Activated CD8-positive, alpha-beta memory T cell treated with anti-CD3 and anti-CD28 coated beads, Interleukin-2, amount 10 ng/mL, durations not matched to agents 7 days and 5 days (primary cell): ENCODE measurements at regions of chr9 and their contacts with region 1.

Region 1: GRCh38 chr9:36487482-36488388 is 85.0 kb upstream of the MELK start:
- DNase-seq: peak; percentile 93
- ATAC-seq: peak; percentile 95
- H3K4me3 Mint-ChIP-seq: peak overlapping the region; percentile 89
- H3K27ac Mint-ChIP-seq: peak overlapping the region; percentile 100
- H3K4me1 Mint-ChIP-seq: peaks cover 54% of the 10 kb centered on the region
- H3K27me3 Mint-ChIP-seq: no peaks in the 10 kb centered on the region

Region 2: GRCh38 chr9:36423206-36423605 is 64.5 kb before region 1 on chr9:
- CTCF ChIA-PET with region 1: no interaction called
- DNase-seq: no peak
- ATAC-seq: no peak
- H3K4me3 Mint-ChIP-seq: no peak overlapping the region
- H3K27ac Mint-ChIP-seq: no peak overlapping the region
- H3K4me1 Mint-ChIP-seq: peaks cover 7% of the 10 kb centered on the region
- H3K27me3 Mint-ChIP-seq: no peaks in the 10 kb centered on the region

Region 3: DNA sequence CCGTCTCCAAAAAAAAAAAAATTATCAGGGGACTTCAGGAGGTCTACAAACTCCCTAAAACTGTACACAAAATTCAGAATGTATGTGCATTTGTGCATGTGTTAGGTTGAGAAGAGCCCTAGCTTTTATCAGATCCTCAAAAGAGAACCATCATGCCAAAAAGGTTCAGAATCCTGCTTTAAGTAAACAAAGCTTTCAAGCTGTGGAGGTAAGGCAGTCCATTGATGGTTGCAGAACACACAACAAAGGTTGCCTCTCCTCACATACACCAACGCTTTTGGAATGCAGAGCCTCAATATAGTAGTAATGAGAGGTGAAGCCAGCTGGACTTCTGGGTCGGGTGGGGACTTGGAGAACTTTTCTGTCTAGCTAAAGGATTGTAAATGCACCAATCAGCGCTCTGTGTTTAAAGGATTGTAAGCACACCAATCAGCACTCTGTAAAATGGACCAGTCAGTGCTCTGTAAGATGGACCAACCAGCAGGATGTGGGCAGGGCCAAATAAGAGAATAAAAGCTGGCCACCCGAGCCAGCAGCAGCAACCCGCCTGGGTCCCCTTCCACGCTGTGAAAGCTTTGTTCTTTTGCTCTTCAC is 29.8 kb before region 1 on chr9:
- CTCF ChIA-PET with region 1: interaction called, 12 read pairs
- DNase-seq: no peak
- ATAC-seq: peak; percentile 35
- H3K4me3 Mint-ChIP-seq: peak overlapping the region; percentile 62
- H3K27ac Mint-ChIP-seq: peak overlapping the region; percentile 80
- H3K4me1 Mint-ChIP-seq: peaks cover 49% of the 10 kb centered on the region
- H3K27me3 Mint-ChIP-seq: no peaks in the 10 kb centered on the region

Region 4: DNA sequence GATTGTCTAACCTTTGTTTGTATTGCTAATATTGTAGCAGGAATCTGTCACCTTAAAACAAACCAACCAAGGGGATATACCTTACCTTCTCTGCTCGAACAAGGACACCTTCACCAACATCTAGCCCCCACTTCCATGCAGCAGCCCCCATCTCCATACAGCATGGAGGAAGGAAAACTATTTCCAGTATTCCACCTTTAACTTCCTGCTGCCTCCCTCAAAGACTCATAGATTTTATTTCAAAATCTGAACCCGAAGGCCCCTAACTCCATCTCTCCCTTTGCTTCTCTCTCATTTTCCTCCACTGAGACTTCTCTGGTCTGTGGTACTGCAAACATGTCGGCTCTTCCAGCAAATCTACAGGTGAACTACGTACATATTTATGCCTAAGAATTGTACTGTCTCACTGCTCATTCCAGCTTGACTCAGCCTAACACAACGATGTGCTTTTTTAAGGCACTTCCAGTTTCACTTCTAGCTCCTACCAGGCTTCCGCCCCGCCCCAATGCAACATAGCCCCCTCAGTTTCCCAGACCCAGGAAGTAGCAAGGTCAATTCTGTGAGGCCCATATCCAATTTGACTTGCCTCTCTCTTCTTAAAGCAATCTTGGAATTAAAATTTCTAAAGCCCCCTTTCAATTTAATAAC is 17.0 kb before region 1 on chr9:
- CTCF ChIA-PET with region 1: interaction called, 16 read pairs
- DNase-seq: peak; percentile 89
- ATAC-seq: peak; percentile 99
- H3K4me3 Mint-ChIP-seq: peak overlapping the region; percentile 80
- H3K27ac Mint-ChIP-seq: peak overlapping the region; percentile 91
- H3K4me1 Mint-ChIP-seq: peaks cover 35% of the 10 kb centered on the region
- H3K27me3 Mint-ChIP-seq: no peaks in the 10 kb centered on the region

Region 5: DNA sequence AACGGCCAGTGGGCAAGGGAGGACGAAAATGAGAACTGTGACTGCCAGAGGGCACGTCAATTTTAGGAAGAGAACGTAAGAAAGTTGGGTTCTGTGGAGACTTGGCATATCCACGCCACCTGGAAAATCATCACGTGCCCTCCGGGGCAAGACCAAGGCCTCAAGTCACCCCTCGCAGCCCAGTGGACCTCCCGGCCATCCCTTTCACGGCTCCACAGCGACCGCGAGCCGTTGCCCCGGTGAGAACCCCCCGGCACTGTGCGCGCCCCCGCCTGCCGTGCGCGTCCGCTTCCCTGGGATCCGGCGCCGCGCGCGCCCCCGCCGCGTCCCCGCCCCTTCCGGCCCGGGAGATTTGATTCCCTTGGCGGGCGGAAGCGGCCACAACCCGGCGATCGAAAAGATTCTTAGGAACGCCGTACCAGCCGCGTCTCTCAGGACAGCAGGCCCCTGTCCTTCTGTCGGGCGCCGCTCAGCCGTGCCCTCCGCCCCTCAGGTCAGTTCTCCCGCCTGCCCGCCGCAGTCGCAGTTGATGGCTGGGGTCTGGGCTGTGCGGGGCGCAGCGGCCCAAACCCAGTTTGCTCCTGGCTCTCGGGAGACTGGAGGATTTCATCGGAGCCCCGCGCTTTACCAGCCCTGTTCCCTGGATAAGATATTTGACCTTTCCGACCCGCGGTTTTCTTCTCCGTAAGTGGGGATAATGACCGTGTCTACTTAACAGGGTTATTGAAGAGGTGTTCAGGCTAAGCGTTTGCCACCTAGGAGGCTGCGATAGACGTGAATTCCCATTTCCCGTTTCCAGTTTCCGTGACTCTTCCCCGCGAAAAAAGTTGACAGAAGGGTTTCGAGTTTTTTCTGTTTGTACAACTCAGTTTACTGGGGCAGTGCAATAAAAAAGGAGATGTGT is 85.0 kb after region 1 on chr9 and contains the start of gene MELK:
- CTCF ChIA-PET with region 1: no interaction called
- DNase-seq: peak; percentile 89
- ATAC-seq: peak; percentile 86
- H3K4me3 Mint-ChIP-seq: peak within 1 kb of the TSS; percentile 98
- H3K27ac Mint-ChIP-seq: peak within 1 kb of the TSS; percentile 81
- H3K4me1 Mint-ChIP-seq: peaks cover 38% of the 10 kb centered on the region
- H3K27me3 Mint-ChIP-seq: peaks cover 9% of the 10 kb centered on the region
- total RNA-seq, gene MELK: 69.6 to 80.4 TPM